Head of caudate nucleus (tissue), 42 donors: ENCODE measurements at regions of chr2 and their contacts with region 1.

Region 1: DNA sequence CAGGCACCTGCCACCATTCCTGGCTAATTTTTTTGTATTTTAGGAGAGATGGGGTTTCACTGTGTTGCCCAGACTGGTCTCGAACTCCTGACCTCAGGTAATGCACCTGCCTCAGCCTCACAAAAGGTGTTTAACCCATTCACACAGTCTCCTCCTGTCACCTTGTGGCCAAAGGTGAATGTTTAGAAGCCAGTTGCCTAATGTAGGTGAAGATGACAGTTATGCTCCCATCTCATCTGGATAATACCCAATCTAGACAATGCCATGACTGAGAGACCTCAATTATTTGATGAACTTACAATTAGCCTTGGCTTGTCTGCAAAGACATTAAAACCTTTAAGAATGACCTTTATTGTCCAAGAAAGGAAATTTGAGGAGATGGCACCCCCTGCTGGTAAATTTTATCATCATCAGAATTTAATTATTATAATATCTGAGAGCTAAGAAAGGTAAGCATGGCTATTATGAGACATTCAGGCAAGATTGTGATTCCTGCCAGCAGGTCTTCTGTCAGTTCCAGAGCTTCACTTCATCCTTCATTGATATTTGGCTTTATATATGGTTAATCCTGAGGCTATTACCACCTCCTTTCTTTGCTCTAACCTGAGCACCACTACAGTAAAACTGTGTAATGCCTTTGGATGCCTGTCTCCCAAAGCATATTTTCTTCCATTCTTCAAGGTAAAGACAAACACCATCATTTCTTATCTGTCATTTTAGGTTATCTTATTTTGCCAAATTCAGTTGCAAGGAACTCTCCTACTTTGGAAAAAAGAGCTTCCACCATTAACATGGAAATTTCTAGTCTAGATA is 117.6 kb downstream of the FAM124B start:
- DNase-seq: peak in 14 of 42 donors; percentile 1 to 75 (median 24)

Region 2: DNA sequence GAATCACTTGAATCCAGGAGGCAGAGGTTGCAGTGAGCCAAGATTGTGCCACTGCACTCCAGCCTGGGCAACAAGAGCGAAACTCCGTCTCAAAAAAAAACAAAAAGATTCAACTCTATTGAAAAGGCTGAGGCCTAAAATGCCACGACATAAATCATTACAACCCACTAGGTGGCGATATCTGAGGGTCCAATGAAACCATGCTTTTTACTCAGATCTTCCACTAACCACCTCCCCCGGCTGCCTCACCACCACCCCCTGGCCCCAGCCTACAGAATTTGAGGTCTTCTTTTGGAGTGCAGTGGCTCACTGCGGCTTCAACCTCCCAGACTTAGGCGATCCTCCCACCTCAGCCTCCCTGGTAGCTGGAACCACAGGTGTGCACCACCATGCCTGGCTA is 504.5 kb before region 1 on chr2:
- intact Hi-C with region 1: no loop called
- DNase-seq: no peak

Region 3: DNA sequence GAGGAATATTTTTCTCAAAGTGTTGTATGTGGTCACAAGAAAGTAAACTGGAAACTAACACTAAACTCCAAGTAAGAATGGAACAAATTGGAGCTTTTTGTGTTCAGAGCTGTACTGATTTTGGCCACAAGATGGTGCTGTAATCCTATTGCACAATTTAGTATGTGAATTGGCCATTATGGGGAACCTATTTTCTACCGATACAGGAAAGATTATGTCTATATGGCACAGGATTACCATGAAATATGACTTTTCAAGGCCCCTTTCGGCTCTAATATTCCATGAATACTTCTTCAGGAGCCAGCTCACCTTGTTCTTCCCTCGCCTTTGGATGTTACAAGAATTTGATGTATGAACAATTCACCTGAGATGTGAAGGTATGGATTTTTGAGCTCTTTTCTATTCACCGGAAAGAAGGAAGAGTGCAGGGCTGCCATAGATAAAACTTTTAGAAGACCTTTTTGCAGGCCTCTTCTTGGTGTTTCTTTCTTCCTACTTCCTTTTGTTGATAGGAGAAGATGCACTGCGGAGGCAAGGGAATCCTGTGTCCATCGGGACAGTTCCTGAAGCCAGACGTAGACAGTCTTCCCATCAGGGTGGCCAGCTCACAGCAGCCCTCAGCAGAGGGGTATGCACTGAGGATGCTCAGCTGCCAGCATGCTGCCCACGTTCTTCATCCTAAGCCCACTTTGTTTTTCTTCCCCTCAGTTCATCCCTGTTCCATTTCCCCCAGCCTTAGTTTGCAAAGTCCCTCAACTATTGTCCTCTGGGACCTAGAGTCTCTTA is 313.8 kb before region 1 on chr2:
- intact Hi-C with region 1: loop called (anchors 5 kb)
- DNase-seq: peak in 28 of 42 donors; percentile 24 to 89 (median 61)

Region 4: DNA sequence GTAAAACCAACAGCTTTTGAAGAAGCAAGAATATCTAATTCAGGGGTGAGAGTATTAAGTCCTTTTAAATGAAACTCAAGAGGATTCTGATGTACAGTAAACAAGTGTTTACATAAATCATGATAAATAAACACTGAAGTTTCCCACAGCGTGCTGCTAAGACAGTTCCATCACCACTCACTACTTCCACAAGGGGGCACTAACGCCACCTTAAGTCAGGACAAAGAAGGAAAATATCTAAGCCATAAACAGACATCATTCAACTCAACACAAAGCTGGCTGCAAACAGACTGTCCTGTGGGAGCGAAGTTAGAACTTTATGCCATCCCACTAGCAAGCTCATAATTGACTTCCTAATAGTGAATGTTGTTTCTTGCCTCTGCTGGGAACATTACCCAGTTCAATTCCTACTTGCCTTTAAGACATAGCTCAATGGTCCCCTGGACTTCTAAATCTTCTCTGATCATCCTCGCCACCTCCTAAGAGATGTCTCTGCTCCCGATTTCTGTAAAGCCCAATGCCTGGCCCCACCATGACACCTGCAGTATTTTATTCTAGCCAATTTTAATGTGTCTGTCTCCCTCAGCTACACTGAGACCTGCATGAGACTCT is 290.6 kb before region 1 on chr2:
- intact Hi-C with region 1: loop called (anchors 5 kb)
- DNase-seq: peak in 40 of 42 donors; percentile 11 to 91 (median 72)

Region 5: GRCh38 chr2:224039941-224040440 is 244.3 kb before region 1 on chr2:
- intact Hi-C with region 1: loop called (anchors 2 kb)
- DNase-seq: peak in 2 of 42 donors; percentile 25 to 34

Region 6: DNA sequence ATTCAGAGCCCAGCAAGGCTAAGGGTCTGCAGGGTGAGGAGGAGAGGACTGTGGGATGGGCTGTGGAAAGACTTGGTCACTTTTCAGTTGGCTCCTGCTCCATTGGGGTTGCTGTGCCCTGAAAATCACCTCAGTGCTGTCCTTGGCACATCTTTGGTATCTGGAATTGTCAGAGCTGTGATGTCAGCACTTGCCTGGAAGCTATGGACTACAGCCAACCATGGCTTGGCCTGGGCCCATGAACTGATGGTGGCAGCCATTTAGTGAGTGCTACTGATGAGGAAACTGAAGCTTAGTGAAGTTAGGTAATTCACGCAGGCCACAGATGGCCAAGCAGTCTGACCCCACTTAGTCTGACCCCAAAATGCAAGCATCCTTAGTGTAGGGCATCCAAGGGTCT is 123.4 kb before region 1 on chr2:
- intact Hi-C with region 1: no loop called
- DNase-seq: peak in 1 of 42 donors; percentile 11

Region 7: GRCh38 chr2:224513991-224514390 is 229.7 kb after region 1 on chr2:
- intact Hi-C with region 1: no loop called
- DNase-seq: no peak